AG04449 (cell line): ENCODE measurements at regions of chr17 and their contacts with region 1.

Region 1: GRCh38 chr17:68172461-68172954 is 75.3 kb upstream of the AMZ2 start:
- DNase-seq: no peak
- H3K4me3 ChIP-seq: no peak overlapping the region
- CTCF ChIP-seq: peak; percentile 80

Region 2: DNA sequence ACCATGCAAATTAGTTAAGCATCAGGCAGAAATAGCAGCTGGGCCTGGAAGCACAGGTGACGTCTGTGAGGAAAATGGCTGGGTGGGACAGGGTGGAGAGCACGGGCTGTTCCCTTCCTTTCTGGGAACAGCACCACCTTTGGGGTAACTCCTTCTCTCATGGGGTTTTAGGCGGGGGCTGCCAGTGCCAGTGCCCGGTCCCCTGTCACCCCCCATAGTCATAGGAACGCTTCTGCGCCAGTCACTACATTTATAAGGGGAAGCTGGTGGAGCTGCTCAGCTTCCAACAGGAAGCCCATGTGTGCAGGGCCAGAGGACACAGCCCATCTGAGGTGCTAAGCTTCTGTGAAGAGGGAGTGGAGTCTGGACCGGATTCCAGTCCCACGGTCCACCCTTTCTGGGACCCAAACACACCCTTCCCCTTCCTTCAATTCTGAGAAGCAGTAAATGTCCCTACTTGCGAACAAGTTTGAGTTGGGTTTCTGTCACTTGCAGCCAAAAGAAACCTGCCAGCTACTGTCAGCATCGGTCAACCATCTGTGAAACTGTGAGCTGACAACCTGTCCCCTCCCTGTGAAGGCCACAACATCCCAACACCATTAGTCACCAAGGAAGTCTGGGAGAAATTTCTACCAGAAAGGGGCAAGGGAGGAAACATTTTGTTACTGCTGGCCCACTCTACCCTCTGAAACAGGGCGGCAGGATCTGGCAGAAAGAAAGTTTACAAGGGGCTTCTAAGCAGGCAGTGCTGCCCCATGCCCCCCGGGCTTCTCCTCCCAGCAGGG is 10.7 kb before region 1 on chr17:
- CTCF ChIA-PET with region 1: interaction called, 11 read pairs
- POLR2A ChIA-PET with region 1: no interaction called
- DNase-seq: no peak
- H3K4me3 ChIP-seq: no peak overlapping the region
- CTCF ChIP-seq: no peak

Region 3: DNA sequence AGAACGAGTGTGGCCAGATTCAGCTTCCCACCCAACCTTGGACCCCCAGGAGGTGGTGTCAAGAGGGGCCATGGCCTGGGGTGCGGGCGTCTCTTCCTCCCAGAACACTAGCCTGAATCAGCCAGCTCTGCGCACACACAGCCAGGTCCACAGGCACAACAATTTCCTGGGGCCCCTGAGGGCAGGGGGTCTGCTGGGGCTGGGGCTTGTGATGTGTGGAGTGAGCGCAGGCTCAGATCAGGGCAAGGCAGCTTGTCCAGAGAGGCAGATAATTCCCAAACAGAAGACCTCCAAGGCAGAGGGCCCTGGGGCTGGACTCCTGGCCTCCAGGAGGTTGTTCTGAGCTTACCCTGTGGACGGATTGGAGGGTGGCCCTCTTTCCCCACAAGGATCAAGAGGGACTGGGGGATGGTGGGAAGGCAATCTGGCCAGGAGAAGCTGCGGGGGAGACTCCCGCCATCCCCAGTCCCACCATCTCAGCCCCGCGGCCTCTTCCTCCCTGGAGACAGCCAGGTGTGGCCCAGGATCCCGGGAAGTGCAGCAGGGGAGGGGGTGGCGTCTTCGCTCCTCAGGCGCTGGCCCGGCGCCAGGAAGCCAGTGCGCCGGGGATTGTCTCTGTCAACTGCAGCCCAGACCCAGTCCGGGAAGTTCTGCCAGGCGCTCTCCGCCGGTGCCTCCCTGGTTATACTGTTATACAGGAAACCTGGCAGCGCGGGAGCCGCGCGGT is 23.3 kb after region 1 on chr17:
- CTCF ChIA-PET with region 1: interaction called, 107 read pairs
- POLR2A ChIA-PET with region 1: no interaction called
- DNase-seq: no peak
- H3K4me3 ChIP-seq: no peak overlapping the region
- CTCF ChIP-seq: no peak

Region 4: GRCh38 chr17:68247445-68248198 is 75.1 kb after region 1 on chr17 and contains the start of gene AMZ2:
- CTCF ChIA-PET with region 1: interaction called, 10 read pairs
- POLR2A ChIA-PET with region 1: interaction called, 3 read pairs
- DNase-seq: peak; percentile 34
- H3K4me3 ChIP-seq: peak within 1 kb of the TSS; percentile 80
- CTCF ChIP-seq: no peak

Region 5: GRCh38 chr17:68457539-68458259 is 285.2 kb after region 1 on chr17:
- CTCF ChIA-PET with region 1: interaction called, 20 read pairs
- POLR2A ChIA-PET with region 1: interaction called, 3 read pairs
- DNase-seq: peak; percentile 85
- H3K4me3 ChIP-seq: peak overlapping the region; percentile 94
- CTCF ChIP-seq: no peak

Region 6: DNA sequence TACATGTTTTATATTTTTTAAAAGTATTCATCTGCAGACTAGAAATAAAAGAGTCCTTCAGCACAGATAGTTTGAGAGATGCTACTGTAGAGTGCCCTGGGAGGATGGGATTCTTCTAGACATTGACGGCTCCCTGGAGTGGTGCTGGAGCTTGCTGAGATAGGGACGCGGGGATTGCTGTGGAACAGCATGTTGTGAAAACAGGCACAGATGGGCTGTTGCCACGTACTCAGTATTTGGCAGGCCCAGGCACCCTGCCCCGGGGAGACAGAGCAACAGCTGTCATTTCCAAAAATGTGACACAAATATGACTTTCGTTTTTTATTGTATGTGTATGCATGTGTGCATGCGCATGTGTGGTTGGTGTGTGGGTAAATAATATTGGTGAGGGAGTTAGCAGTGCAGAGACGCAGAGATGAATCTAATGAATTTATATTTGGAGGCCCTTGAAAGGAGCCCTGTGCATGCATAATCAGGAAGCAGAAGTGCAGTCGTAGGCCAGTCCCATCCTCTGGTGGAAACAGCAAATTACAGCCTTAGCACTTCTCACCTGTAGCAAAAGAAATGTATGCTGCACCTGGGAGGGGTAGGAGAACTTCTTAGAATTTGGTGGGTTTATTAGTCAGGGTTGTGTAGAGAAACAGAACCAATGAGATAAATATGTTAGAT is 788.8 kb after region 1 on chr17:
- CTCF ChIA-PET with region 1: no interaction called
- POLR2A ChIA-PET with region 1: no interaction called
- DNase-seq: no peak
- H3K4me3 ChIP-seq: no peak overlapping the region
- CTCF ChIP-seq: no peak